MCF 10A (cell line): ENCODE measurements at regions of chr2 and their contacts with region 1.

Region 1: DNA sequence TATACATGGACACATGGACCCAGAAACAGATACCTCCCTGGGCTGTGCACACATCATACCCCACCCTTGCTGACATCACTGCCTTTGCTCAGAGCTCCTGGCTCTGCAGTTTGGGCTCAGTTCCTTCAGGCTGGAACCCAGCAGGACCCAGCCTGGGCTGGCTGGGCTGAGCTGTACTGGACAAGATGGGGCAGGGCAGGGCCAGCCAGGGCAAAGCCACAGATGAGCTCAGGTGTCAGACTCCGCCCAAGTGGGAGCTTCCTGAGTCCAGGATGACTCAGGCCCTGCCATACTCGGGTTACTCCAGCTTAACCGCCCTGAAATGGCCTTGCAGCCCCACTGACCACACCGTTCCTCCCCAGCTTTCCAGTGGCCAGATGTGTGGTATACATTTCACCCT is 284.9 kb downstream of the OSR1 start:
- DNase-seq: peak; percentile 97
- H3K4me3 Mint-ChIP-seq: no peak overlapping the region
- H3K27ac Mint-ChIP-seq: peak overlapping the region; percentile 77
- H3K4me1 Mint-ChIP-seq: peaks cover 31% of the 10 kb centered on the region
- H3K27me3 Mint-ChIP-seq: no peaks in the 10 kb centered on the region
- CTCF ChIP-seq: no peak

Region 2: GRCh38 chr2:19038071-19039015 is 35.2 kb before region 1 on chr2:
- CTCF ChIA-PET with region 1: no interaction called
- POLR2A ChIA-PET with region 1: no interaction called
- intact Hi-C with region 1: loop called (anchors 5 kb)
- DNase-seq: peak; percentile 50
- H3K4me3 Mint-ChIP-seq: no peak overlapping the region
- H3K27ac Mint-ChIP-seq: peak overlapping the region; percentile 49
- H3K4me1 Mint-ChIP-seq: peaks cover 12% of the 10 kb centered on the region
- H3K27me3 Mint-ChIP-seq: no peaks in the 10 kb centered on the region
- CTCF ChIP-seq: no peak

Region 3: DNA sequence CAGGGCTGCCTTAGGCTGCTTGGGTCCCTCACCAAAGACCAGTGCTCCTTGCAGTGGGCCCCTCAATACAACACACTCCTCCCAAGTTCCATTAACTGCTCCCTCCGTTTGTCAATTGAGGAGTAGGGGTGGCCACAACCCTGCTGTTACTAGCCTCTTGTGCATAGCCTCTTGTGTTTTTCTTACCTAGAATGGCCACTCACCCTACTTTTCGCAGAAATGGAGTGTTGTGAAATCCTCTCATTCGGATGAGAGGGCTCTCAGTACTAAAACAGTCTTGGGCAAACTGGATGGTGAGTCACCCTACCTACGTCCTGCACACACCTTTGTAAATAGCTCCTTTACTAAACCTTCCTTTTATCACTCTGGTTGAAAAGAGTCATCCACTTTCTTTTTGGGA is 31.0 kb after region 1 on chr2:
- CTCF ChIA-PET with region 1: no interaction called
- POLR2A ChIA-PET with region 1: interaction called, 11 read pairs
- intact Hi-C with region 1: no loop called
- DNase-seq: peak; percentile 90
- H3K4me3 Mint-ChIP-seq: no peak overlapping the region
- H3K27ac Mint-ChIP-seq: peak overlapping the region; percentile 87
- H3K4me1 Mint-ChIP-seq: peaks cover 13% of the 10 kb centered on the region
- H3K27me3 Mint-ChIP-seq: no peaks in the 10 kb centered on the region
- CTCF ChIP-seq: no peak